ENCODE measurements at regions of chr2 and their contacts with region 1.

Region 1: DNA sequence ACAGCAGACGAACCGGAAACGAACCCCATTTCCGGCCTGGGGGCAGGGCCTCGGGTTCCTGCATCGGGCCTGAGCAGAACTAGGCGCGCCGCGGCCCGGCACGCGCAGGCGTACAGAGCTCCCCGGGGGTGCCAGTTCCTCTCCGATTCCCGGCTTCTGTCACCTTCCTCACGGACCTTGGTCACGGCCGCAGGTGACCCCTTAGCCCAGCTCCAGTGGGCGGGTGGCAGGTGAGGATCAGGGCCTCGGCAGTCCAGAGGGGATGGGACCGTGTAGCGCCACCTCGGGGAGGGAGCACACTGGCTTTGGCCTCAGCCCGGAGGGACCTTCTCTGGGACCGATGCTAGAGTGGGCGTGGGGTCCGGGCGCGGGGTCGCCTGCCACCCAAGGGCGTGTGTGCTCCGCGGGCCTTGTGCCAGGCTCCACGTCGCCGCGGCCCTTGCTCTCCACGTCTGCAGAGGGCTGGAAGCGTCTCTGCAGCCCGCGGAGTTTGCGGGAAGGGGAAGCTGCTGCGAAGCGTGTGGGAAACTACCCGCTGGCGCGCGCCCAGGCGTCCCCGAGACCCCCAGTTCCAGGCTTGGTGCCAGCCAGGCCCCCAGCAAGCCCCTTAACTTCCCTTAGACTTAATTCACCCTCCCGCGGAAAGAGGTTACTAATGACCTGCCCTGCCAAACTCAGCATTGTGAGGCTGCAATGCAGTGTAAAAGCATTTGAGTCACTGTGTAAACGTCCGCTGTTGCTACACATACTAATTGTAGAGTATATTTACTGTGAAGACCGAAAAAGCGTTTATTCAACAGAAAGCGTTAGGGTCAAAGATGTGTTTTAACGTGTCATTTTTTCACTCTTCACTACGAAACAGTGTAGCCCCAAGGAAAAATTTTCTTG is at the start of gene TRAPPC12:
- DNase-seq: peak; percentile 99
- H3K4me3 Mint-ChIP-seq: peak within 1 kb of the TSS; percentile 99
- H3K27ac Mint-ChIP-seq: peak within 1 kb of the TSS; percentile 98
- H3K4me1 Mint-ChIP-seq: peaks cover 34% of the 10 kb centered on the region
- H3K27me3 Mint-ChIP-seq: no peaks in the 10 kb centered on the region
- total RNA-seq, gene TRAPPC12: 87.8 and 91.7 TPM in 2 replicates

Region 2: DNA sequence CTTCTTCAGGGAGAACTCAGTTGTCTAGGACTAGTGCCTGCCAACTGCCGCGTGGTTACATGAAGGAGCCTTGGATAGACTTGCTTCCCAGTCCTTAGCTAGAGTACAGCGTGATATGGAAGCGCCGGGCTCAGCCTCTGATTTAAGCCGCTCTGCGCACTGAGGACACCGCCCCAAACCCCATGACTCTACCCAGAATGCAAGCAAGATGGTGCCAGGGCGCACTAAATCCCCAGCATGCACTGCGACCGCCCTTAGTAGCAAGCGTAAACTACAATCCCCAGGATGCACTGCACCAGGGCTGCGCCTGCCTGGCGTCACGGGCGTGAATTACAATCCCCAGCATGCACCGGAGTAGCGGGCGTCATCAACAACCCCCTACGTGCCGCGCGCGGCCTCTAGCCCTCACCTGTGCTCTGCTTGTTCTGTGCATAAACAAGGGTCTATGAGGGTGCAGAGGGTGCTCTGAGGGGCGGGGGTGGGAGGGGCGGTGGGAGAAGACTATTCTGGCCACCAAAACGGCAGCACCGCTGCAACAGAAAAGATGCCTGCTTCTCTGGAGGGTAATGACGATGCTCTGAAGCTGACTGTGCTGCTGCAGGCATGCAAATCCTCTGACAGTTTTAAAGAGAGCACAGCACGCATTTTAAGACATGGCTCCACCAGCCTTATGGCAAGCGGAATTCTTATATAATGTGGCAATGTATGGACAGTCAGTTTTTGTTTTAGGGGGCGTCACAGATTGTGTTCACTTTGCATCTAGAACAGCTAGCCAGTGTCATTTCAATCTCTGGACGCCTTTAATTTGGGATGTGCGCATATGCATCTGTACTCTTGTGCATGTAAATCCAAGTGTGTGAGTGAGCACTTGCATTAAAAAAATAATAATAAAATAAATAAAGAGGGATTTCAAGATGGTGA is 766.4 kb before region 1 on chr2:
- intact Hi-C with region 1: loop called (anchors 5 kb)
- DNase-seq: peak; percentile 97
- H3K4me3 Mint-ChIP-seq: peak overlapping the region; percentile 84
- H3K27ac Mint-ChIP-seq: peak overlapping the region; percentile 82
- H3K4me1 Mint-ChIP-seq: peaks cover 4% of the 10 kb centered on the region
- H3K27me3 Mint-ChIP-seq: peaks cover 13% of the 10 kb centered on the region

Region 3: GRCh38 chr2:3223080-3223923 is 156.6 kb before region 1 on chr2:
- intact Hi-C with region 1: loop called (anchors 1 kb)
- DNase-seq: peak; percentile 91
- H3K4me3 Mint-ChIP-seq: peak overlapping the region; percentile 52
- H3K27ac Mint-ChIP-seq: peak overlapping the region; percentile 94
- H3K4me1 Mint-ChIP-seq: peaks cover 42% of the 10 kb centered on the region
- H3K27me3 Mint-ChIP-seq: no peaks in the 10 kb centered on the region

Region 4: DNA sequence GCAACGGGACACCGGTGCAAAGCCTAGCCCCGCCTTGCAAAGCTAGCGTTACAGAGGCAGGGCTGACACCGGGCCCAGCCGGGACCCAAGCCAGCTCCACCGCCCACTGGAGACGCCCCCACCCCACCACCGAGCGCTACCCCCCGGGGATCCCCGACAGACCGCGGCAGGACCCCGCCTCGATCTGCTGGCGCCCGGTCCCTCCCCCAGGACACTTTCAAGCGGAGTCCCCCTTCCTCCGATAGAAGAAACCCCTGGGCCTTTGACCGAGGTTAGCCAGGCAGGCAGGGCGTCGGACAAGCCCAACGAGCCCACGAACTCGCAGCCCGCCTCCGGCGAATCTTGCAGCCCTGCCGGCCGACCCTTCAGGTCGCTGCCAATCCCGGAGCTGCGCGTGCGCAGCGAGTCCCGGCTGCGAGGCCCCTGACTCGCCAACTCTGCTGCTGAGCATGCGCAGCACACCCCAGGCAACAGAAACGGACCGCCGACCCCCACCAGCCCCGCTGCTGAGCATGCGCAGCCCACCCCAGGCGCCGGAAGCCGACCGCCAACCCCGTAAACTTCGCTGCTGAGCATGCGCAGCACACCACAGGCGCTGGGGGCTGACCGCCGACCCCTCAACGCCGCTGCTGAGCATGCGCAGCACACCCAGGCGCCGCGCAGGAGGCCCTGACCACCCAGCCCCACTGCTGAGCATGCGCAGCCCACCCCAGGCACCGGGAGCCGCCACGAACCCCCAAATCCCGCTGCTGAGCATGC is 138.8 kb after region 1 on chr2:
- intact Hi-C with region 1: loop called (anchors 1 kb)
- DNase-seq: peak; percentile 99
- H3K4me3 Mint-ChIP-seq: peak overlapping the region; percentile 86
- H3K27ac Mint-ChIP-seq: peak overlapping the region; percentile 82
- H3K4me1 Mint-ChIP-seq: peaks cover 33% of the 10 kb centered on the region
- H3K27me3 Mint-ChIP-seq: no peaks in the 10 kb centered on the region

Region 5: GRCh38 chr2:3558205-3559014 is 178.5 kb after region 1 on chr2 and contains the start of gene RNASEH1:
- intact Hi-C with region 1: loop called (anchors 1 kb)
- DNase-seq: peak; percentile 100
- H3K4me3 Mint-ChIP-seq: peak within 1 kb of the TSS; percentile 89
- H3K27ac Mint-ChIP-seq: peak within 1 kb of the TSS; percentile 90
- H3K4me1 Mint-ChIP-seq: peaks cover 26% of the 10 kb centered on the region
- H3K27me3 Mint-ChIP-seq: no peaks in the 10 kb centered on the region
- total RNA-seq, gene RNASEH1: 27.8 and 29.8 TPM in 2 replicates

Region 6: DNA sequence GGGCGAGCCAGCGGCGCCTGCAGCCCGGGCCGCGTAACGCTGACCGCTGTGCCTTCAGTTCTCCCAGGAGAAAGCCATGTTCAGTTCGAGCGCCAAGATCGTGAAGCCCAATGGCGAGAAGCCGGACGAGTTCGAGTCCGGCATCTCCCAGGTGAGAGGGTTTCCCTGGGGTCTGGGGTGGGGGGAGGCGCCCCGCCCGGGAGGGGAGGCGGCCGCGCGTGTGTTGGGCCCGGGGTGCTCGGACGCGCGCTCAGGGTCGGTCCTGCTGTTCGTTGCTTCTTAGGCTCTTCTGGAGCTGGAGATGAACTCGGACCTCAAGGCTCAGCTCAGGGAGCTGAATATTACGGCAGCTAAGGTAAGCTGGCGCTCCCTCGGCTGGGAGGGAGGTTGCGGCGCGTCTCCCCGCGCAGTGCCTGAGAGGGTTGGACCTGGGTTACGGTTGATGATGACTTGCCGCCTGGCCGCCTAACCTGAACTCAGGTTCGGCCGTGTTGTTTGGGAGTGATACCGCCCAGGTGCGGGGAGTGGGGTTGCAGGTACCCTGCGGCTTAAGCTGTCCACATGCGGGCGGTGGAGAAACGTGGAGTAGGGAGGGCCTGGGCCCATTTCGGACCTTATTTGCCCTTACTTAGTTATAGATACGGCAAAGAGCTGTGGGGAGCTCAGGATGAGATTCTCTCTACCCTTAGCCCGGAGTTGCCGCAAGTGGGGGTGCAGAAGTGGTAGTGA is 195.8 kb after region 1 on chr2:
- intact Hi-C with region 1: loop called (anchors 1 kb)
- DNase-seq: peak; percentile 78
- H3K4me3 Mint-ChIP-seq: peak overlapping the region; percentile 92
- H3K27ac Mint-ChIP-seq: peak overlapping the region; percentile 84
- H3K4me1 Mint-ChIP-seq: peaks cover 45% of the 10 kb centered on the region
- H3K27me3 Mint-ChIP-seq: no peaks in the 10 kb centered on the region

Region 7: GRCh38 chr2:3838348-3838747 is 458.5 kb after region 1 on chr2:
- intact Hi-C with region 1: no loop called
- DNase-seq: no peak
- H3K4me3 Mint-ChIP-seq: no peak overlapping the region
- H3K27ac Mint-ChIP-seq: no peak overlapping the region
- H3K4me1 Mint-ChIP-seq: no peaks in the 10 kb centered on the region
- H3K27me3 Mint-ChIP-seq: no peaks in the 10 kb centered on the region